Sciatic nerve (tissue), 2 donors: ENCODE measurements at regions of chr1 and their contacts with region 1.

Region 1: DNA sequence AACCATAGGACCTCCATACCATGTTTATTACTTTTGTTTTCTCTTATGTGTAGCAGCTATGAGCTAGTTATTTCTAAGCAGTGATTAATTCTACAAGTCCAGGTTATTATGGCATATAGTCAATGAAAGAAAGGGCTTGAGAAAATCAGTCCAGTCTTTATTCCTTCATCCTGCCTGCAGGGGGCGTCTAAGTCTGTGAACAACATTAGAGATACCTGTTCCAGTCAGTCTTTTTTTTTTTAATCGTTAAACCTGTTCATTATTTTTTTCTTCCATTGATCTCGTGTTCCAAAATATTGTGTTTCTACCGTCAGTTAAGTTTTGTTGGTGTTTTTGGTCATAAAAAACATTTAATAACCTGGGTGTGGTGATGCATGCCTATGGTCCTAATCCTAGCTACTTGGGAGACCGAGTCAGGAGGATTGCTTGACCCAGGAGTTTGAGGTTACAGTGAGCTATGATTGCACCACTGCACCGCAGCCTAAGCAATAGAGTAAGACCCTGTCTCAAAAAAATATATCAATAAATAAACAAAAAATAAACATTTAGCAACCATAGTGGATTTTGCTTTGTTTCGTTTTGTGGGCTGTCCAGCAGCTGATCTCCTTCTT is 29.4 kb upstream of the CD2 start:
- DNase-seq: peak; percentile 71
- ATAC-seq: no peak

Region 2: GRCh38 chr1:116693759-116694482 is 30.9 kb before region 1 on chr1:
- intact Hi-C with region 1: no loop called
- DNase-seq: no peak
- ATAC-seq: peak; percentile 40

Region 3: DNA sequence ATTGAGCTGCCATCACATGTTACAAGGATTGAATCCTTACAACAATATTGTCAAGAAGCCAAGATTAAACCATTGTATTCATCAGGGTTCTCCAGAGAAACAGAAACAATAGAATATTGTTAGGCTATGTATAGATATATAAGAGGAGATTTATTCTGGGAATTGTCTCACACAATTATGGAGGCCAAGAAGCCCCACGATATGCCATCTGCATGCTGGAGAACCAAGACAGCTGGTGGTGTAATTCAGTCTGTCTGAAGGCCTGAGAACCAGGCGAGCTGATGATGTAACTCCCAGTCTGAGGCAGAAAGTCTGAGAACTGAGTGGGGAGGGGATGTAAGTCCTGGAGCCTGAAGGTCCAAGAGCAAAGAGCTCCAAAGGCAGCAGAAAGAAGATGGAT is 320.8 kb after region 1 on chr1:
- intact Hi-C with region 1: loop called (anchors 10 kb)
- DNase-seq: no peak
- ATAC-seq: no peak